Activated CD4-positive, alpha-beta memory T cell treated with anti-CD3 and anti-CD28 coated beads for 36 hours (primary cell): ENCODE measurements at regions of chr7 and their contacts with region 1.

Region 1: GRCh38 chr7:107168233-107169119 is at the start of gene HBP1:
- DNase-seq: peak; percentile 99
- H3K4me3 Mint-ChIP-seq: peak within 1 kb of the TSS; percentile 96
- H3K27ac Mint-ChIP-seq: peak within 1 kb of the TSS; percentile 97
- H3K4me1 Mint-ChIP-seq: peaks cover 32% of the 10 kb centered on the region
- H3K27me3 Mint-ChIP-seq: peaks cover 2% of the 10 kb centered on the region
- total RNA-seq, gene HBP1: 24.3 to 26.7 TPM

Region 2: DNA sequence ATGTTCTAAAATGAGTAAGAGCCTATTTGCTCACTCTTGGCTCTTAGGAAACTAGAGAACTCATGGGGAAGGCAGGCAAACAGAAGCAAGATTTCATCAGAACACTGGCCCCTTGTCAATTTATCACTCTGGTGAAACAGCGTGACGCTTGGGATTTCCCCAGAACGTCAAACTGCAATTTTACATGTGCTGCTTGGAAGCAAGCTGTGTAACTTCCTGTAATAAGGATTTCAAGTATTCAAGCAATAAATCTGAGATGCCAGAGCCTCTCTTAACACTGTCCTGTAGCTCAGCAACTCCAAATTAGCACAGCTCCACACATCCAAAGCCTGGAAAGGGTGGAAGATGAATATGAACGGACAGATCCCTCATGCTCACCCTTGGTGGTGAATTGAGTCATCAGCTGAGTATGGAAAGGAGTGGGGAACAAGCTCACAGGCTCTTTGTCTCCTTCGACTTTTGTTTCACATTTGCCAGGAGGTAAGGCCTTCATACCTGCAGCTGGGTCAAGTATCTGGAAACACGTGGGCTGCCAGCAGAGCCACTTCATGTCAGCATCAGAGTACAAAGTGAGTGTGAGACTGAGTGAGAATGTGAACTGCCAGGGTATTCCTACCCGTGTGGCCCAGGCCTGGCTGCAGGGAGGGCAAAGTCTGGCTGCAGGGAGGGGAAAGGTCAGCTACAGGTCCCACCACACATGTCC is 743.3 kb before region 1 on chr7:
- CTCF ChIA-PET with region 1: no interaction called
- POLR2A ChIA-PET with region 1: no interaction called
- intact Hi-C with region 1: loop called (anchors 5 kb)
- DNase-seq: peak; percentile 91
- H3K4me3 Mint-ChIP-seq: peak overlapping the region; percentile 65
- H3K27ac Mint-ChIP-seq: peak overlapping the region; percentile 97
- H3K4me1 Mint-ChIP-seq: peaks cover 81% of the 10 kb centered on the region
- H3K27me3 Mint-ChIP-seq: no peaks in the 10 kb centered on the region

Region 3: DNA sequence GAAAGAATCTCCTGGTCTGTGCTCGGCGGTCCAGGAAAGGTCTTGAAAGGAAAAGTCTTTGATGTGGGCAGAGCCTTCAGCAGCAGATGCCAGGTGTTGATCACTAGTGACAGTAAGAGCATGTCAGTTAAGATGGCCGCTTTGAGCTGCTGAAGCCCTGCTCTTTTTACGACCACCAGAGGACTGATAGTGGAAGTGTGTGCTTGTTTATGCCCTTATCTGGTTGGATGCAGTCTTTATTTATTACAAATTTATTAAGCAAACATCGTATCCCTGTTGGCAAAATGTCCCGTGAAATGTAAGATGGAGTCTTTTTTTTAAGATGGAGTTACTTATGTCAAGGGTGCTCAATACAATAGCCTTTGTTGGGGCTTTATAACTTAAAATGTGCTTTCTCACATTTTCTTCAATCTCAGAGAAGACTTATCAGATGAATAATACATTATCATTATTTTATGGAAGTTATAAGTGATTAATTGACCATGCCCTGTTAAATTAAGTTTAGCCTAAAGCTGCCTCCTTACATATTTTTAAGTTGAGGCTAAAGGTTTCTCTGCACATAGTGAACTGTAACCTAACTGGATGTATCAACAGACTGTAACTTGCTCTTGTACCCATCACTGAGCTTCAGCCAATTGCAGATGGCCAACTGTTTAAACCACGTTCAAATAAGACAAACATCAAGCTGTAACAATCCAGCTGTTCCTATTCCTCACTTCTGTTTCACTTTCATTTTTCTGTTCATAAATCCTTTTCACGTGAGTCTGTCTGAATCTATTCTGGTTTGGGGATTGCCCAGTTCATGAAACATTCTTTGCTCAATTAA is 400.8 kb before region 1 on chr7:
- CTCF ChIA-PET with region 1: no interaction called
- POLR2A ChIA-PET with region 1: no interaction called
- intact Hi-C with region 1: loop called (anchors 1 kb)
- DNase-seq: peak; percentile 18
- H3K4me3 Mint-ChIP-seq: peak overlapping the region; percentile 42
- H3K27ac Mint-ChIP-seq: peak overlapping the region; percentile 65
- H3K4me1 Mint-ChIP-seq: peaks cover 49% of the 10 kb centered on the region
- H3K27me3 Mint-ChIP-seq: no peaks in the 10 kb centered on the region

Region 4: GRCh38 chr7:107150375-107151073 is 18.0 kb before region 1 on chr7:
- CTCF ChIA-PET with region 1: interaction called, 36 read pairs
- POLR2A ChIA-PET with region 1: interaction called, 5 read pairs
- intact Hi-C with region 1: loop called (anchors 1 kb)
- DNase-seq: peak; percentile 81
- H3K4me3 Mint-ChIP-seq: no peak overlapping the region
- H3K27ac Mint-ChIP-seq: no peak overlapping the region
- H3K4me1 Mint-ChIP-seq: peaks cover 6% of the 10 kb centered on the region
- H3K27me3 Mint-ChIP-seq: no peaks in the 10 kb centered on the region

Region 5: GRCh38 chr7:107661081-107661864 is 492.8 kb after region 1 on chr7:
- CTCF ChIA-PET with region 1: no interaction called
- POLR2A ChIA-PET with region 1: interaction called, 5 read pairs
- intact Hi-C with region 1: loop called (anchors 1 kb)
- DNase-seq: peak; percentile 70
- H3K4me3 Mint-ChIP-seq: peak overlapping the region; percentile 84
- H3K27ac Mint-ChIP-seq: peak overlapping the region; percentile 93
- H3K4me1 Mint-ChIP-seq: peaks cover 30% of the 10 kb centered on the region
- H3K27me3 Mint-ChIP-seq: peaks cover 11% of the 10 kb centered on the region

Region 6: DNA sequence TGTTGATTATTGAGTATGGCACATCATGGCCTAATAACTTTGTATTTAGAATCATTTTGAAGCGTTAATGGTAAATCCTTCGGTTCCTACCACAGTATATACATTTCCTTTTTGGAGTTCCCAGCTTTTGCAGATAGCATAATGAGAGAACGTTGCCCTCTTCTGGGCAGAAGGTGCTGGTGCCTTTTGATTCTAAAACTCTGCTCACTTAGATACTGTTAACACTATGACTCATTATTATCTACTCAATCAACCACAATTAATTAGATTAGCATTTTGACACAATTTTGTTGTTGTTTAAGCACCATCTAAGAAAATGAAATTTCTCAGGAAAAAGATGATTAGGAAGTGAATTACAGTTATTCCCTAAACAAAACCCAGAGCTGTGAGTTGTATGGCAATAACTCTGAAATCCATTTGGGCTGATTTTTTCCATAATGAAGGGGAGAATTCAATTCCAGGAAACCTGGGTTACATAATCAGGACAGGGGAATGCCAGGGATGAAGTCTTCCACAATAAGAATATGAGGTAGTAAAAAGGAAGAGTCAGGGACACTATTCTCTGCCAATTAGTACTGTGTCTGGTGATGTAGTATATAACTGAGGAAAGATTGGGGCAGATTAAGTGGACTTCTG is 711.0 kb after region 1 on chr7:
- CTCF ChIA-PET with region 1: interaction called, 5 read pairs
- POLR2A ChIA-PET with region 1: no interaction called
- intact Hi-C with region 1: loop called (anchors 2 kb)
- DNase-seq: peak; percentile 47
- H3K4me3 Mint-ChIP-seq: no peak overlapping the region
- H3K27ac Mint-ChIP-seq: peak overlapping the region; percentile 24
- H3K4me1 Mint-ChIP-seq: peaks cover 20% of the 10 kb centered on the region
- H3K27me3 Mint-ChIP-seq: no peaks in the 10 kb centered on the region